ENCODE measurements at regions of chr9 and their contacts with region 1.

Region 1: DNA sequence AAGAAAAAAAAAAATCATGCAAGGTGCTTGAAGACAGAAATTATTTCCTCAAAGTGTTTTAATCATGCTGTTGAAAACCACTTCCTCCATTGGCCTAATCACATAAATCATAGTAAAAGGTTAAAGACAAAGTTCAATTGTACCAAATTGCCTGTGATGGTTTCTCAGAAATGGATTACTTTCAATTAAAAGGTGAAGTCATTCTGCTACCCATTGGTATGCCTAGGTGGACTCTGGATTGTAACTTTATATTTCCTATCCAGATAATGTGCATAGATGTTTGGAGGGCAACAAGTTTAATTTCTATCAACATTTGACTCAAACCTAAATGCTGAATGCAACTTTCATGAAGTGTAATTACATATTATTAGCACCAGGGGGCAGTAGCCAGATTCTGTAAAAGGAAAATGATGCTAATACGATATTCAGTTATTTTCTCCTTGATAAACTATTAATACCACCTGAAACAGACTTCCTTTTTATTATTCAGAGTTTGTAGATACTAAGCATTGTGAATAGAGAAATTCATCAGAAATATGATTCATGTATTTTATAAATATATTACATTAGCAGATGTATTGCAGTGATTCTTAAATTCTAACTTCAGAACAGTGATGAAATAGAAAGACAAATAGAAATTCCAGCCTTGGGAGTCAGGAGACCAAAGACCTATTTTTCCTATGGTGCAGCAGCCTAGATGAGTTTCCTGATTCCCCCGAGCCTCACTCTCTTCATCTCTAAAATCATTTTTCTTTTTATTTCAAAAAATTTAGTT is 148.2 kb downstream of the CAAP1 start:
- DNase-seq: no peak
- H3K4me3 ChIP-seq: no peak overlapping the region
- H3K27ac ChIP-seq: no peak overlapping the region
- H3K4me1 ChIP-seq: no peaks in the 10 kb centered on the region
- H3K27me3 ChIP-seq: no peaks in the 10 kb centered on the region
- CTCF ChIP-seq: peak; percentile 84

Region 2: GRCh38 chr9:26548781-26549290 is 195.5 kb before region 1 on chr9:
- intact Hi-C with region 1: no loop called
- DNase-seq: no peak
- H3K4me3 ChIP-seq: no peak overlapping the region
- H3K27ac ChIP-seq: no peak overlapping the region
- H3K4me1 ChIP-seq: no peaks in the 10 kb centered on the region
- H3K27me3 ChIP-seq: no peaks in the 10 kb centered on the region
- CTCF ChIP-seq: no peak

Region 3: DNA sequence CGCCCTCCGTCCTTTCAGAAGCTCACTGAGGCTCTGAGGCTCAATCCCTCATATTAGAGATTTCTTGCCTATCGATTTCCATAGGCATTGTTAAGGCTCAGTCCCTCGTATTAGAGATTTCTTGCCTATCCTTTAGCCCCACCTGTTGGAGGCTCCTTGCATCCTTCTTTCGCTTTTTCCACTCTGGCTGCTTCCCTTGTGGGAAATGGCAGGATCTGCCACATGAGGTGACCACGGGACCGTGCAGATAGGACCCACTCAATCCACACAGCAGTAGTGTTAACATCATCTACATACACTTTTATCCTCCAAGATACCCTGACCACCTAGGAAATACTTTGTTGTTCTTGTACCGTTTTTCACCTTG is 231.3 kb after region 1 on chr9:
- intact Hi-C with region 1: loop called (anchors 5 kb)
- DNase-seq: no peak
- H3K4me3 ChIP-seq: no peak overlapping the region
- H3K27ac ChIP-seq: no peak overlapping the region
- H3K4me1 ChIP-seq: peaks cover 3% of the 10 kb centered on the region
- H3K27me3 ChIP-seq: no peaks in the 10 kb centered on the region
- CTCF ChIP-seq: peak; percentile 77

Region 4: GRCh38 chr9:27125030-27125429 is 380.7 kb after region 1 on chr9:
- intact Hi-C with region 1: no loop called
- DNase-seq: peak; percentile 67
- H3K4me3 ChIP-seq: no peak overlapping the region
- H3K27ac ChIP-seq: peak overlapping the region; percentile 49
- H3K4me1 ChIP-seq: peaks cover 66% of the 10 kb centered on the region
- H3K27me3 ChIP-seq: no peaks in the 10 kb centered on the region
- CTCF ChIP-seq: no peak

Measured in left ventricle myocardium inferior (tissue), 1 donor.